Gastrocnemius medialis (tissue), 4 donors: ENCODE measurements at regions of chr6 and their contacts with region 1.

Region 1: GRCh38 chr6:105793130-105793529 is 293.0 kb upstream of the PRDM1 start:
- DNase-seq: no peak
- ATAC-seq: no peak
- H3K4me3 ChIP-seq: no peak overlapping the region
- H3K27ac ChIP-seq: peak overlapping the region in 3 of 4 donors; percentile 81 to 91 (median 90)
- H3K4me1 ChIP-seq: peaks cover 46 to 49% of the 10 kb centered on the region in 2 donors
- H3K27me3 ChIP-seq: no peaks in the 10 kb centered on the region
- CTCF ChIP-seq: no peak
- POLR2A ChIP-seq: no peak

Region 2: DNA sequence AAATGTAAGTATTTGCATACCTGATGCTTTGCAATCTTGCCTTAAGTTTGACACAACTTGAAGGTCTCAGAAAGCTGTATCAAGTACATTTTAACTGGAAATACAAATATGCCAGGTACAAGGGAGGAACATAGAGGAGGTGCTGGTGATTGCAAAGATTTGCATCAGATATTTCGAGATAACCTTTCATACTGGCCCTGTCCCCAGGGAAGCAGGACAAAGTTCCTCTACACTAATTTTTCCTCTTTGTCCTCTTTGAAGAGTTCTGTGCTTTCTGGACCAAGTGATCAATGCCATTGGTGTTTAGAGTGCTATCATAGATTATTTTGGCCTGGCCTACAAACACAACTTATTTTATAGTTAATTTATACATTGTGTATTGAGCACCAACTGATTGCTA is 1619.5 kb before region 1 on chr6:
- in situ Hi-C with region 1: no loop called
- intact Hi-C with region 1: no loop called
- DNase-seq: no peak
- ATAC-seq: no peak
- H3K4me3 ChIP-seq: no peak overlapping the region
- H3K27ac ChIP-seq: no peak overlapping the region
- H3K4me1 ChIP-seq: no peaks in the 10 kb centered on the region
- H3K27me3 ChIP-seq: no peaks in the 10 kb centered on the region
- CTCF ChIP-seq: no peak
- POLR2A ChIP-seq: no peak

Region 3: GRCh38 chr6:105164418-105164817 is 628.7 kb before region 1 on chr6:
- in situ Hi-C with region 1: no loop called
- intact Hi-C with region 1: loop called (anchors 10 kb)
- DNase-seq: peak; percentile 88 to 92
- ATAC-seq: peak; percentile 93 to 95
- H3K4me3 ChIP-seq: peak overlapping the region in 3 of 4 donors; percentile 16 to 20 (median 19)
- H3K27ac ChIP-seq: peak overlapping the region; percentile 89 to 93 (median 91)
- H3K4me1 ChIP-seq: peaks cover 73 to 81% of the 10 kb centered on the region in 2 donors
- H3K27me3 ChIP-seq: no peaks in the 10 kb centered on the region
- CTCF ChIP-seq: no peak
- POLR2A ChIP-seq: peak; percentile 18 to 69

Region 4: DNA sequence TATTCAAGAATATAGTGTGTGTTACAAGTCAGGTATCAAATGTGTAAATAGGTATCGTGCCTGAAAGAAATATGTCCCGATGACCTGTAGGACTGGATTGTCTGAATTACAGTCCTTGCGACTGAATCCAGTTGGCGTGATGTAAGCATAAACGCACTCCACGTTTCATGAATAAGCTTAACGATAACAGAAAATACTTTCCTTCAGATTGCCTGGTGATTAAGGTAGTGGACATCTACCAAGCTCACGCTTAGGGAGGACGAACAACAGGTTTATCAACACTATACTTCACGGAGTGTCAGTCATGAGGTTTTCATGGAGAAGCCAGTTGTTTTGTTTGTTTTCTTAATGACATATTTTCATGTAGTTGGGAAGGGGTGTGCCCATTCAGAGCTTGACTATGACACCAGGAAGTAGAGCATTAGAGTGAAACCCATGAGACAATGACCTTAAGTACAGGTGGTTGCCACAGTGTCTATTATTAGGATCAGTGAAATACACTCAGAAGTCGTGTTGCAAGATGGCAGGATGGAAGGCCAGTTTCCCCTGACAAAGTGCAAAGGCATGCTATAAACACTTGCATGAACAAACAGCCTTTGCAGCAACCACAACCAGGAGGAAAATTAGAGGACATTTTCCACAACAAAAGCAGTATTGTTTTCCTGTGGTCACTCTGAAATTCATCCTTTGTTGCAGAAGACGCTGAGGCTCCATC is 12.8 kb before region 1 on chr6:
- in situ Hi-C with region 1: no loop called
- intact Hi-C with region 1: loop called (anchors 2 kb)
- DNase-seq: peak in 1 of 2 donors; percentile 74
- ATAC-seq: peak; percentile 91 to 99
- H3K4me3 ChIP-seq: no peak overlapping the region
- H3K27ac ChIP-seq: peak overlapping the region; percentile 53 to 74 (median 62)
- H3K4me1 ChIP-seq: peaks cover 4% of the 10 kb centered on the region in 2 donors
- H3K27me3 ChIP-seq: no peaks in the 10 kb centered on the region
- CTCF ChIP-seq: no peak
- POLR2A ChIP-seq: no peak